ENCODE measurements at regions of chr7 and their contacts with region 1.

Region 1: DNA sequence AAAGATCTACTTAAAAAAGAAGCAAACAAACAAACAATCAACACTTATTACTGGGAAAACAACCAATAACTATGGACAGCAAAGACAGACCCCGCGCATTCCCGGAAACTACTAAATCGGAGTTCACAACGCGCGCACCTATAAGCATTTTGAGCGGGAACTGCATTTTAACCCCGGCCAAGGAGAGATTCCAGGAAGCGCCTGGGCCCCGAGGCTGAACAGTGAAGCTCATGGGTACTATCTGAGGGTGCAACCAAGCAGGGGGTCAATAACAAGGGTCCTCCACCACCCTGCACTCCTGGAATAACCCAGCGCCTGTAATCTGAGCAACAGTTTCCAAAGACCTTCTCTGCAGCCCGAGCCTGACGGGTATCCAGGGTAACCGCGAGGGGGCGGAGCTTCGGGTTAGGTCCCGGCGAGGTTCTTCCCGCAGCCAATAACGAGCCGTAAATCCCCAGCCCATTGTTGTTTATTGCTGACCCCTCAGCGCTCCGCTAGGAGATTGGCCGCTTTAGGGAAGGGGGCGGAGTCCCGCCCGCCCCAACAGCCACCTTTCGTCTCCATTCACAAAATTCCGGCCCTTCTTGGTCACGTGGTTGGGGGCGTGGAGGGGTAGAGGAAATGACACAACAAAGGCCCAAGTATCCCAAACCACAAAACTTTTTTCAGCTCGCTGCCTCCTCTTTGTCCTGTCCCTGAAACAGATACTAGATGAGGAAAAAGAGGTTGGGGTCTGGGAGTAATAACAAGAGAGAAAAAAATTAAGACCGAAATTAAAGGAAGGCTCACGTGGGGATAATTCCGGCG is 1.7 kb upstream of the ETV1 start:
- DNase-seq: peak; percentile 94 to 98 (median 97)
- ATAC-seq: peak; percentile 96 to 98 (median 97)
- H3K4me3 ChIP-seq: peak overlapping the region; percentile 59 to 85 (median 71)
- H3K27ac ChIP-seq: peak overlapping the region; percentile 87 to 96 (median 93)
- H3K4me1 ChIP-seq: peaks cover 0 to 15% (median 4%) of the 10 kb centered on the region in 12 donors
- H3K27me3 ChIP-seq: peaks cover 0 to 2% (median 0%) of the 10 kb centered on the region in 9 donors
- CTCF ChIP-seq: peak in 6 of 12 donors; percentile 7 to 37 (median 20)
- POLR2A ChIP-seq: peak in 1 of 2 donors; percentile 66

Region 2: GRCh38 chr7:14070746-14071444 is 79.7 kb after region 1 on chr7:
- intact Hi-C with region 1: loop called in 2 of 10 experiments (anchors 1 to 5 kb)
- DNase-seq: no peak
- ATAC-seq: no peak
- H3K4me3 ChIP-seq: no peak overlapping the region
- H3K27ac ChIP-seq: no peak overlapping the region
- H3K4me1 ChIP-seq: peaks cover 0 to 14% (median 0%) of the 10 kb centered on the region in 12 donors
- H3K27me3 ChIP-seq: no peaks in the 10 kb centered on the region
- CTCF ChIP-seq: no peak
- POLR2A ChIP-seq: no peak

Region 3: DNA sequence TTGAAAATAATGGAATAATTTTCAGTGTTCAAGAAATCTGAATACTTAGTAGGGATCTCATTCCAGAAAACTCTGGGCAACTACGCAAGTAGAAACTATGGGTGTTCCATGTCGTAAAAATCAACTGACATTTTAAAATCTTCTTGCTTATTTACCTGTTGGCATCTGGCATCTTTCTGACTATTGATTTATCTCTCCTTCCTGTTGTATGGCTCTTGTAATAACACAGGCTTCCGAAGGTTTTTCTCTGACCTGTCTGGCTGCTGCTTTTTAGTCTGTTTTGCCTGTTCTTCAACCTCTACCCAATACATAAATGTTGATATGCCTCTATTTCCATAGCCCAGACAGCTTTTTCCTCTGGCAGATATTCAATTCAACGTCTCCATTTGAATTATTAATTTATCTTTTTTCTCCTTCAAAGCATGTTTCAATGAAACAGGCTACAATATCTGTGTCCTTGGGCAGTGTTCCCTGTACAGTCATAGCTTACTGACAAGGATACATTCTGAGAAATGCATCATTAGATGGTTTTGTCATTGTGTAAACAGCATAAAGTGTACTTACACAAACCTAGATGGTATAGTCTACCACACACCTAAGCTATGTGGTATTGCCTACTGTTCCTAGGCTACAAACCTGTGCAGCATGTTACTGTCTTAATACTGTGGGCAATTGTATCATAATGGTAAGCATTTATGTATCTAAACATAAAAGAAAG is 104.2 kb after region 1 on chr7:
- intact Hi-C with region 1: no loop called
- DNase-seq: no peak
- ATAC-seq: no peak
- H3K4me3 ChIP-seq: no peak overlapping the region
- H3K27ac ChIP-seq: no peak overlapping the region
- H3K4me1 ChIP-seq: no peaks in the 10 kb centered on the region
- H3K27me3 ChIP-seq: no peaks in the 10 kb centered on the region
- CTCF ChIP-seq: no peak
- POLR2A ChIP-seq: no peak

Region 4: DNA sequence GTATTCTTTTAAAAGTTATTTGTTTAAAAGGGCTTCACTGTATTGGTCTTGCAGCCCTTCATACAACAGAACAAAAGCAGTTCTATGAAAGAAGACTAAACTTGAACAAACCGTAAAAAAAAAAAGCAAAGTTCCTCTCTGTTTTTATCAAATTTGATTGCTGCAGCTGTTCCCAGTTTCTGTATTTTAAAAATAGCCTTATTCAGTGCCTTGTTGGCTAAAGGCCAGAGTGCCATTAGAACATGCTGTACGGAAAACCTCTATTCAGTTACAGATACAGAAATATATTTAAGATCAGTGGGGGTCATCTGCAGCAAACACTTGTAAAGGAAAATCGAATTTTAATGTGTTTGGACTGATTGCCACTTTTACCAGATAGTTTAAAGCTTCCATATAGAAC is 206.1 kb after region 1 on chr7:
- intact Hi-C with region 1: loop called in 5 of 10 experiments (anchors 5 to 10 kb)
- DNase-seq: peak in 4 of 5 donors; percentile 32 to 42 (median 38)
- ATAC-seq: peak; percentile 63 to 85 (median 76)
- H3K4me3 ChIP-seq: peak overlapping the region in 2 of 12 donors; percentile 0 to 3
- H3K27ac ChIP-seq: peak overlapping the region in 10 of 12 donors; percentile 6 to 61 (median 34)
- H3K4me1 ChIP-seq: peaks cover 0 to 23% (median 15%) of the 10 kb centered on the region in 12 donors
- H3K27me3 ChIP-seq: no peaks in the 10 kb centered on the region
- CTCF ChIP-seq: no peak
- POLR2A ChIP-seq: no peak

Region 5: GRCh38 chr7:14207138-14207537 is 216.0 kb after region 1 on chr7:
- intact Hi-C with region 1: loop called in 2 of 10 experiments (anchors 10 kb)
- DNase-seq: peak in 4 of 5 donors; percentile 11 to 57 (median 25)
- ATAC-seq: peak; percentile 90 to 97 (median 96)
- H3K4me3 ChIP-seq: no peak overlapping the region
- H3K27ac ChIP-seq: peak overlapping the region in 5 of 12 donors; percentile 5 to 77 (median 63)
- H3K4me1 ChIP-seq: peaks cover 0 to 10% (median 0%) of the 10 kb centered on the region in 12 donors
- H3K27me3 ChIP-seq: no peaks in the 10 kb centered on the region
- CTCF ChIP-seq: no peak
- POLR2A ChIP-seq: no peak

Region 6: GRCh38 chr7:14340393-14341074 is 349.3 kb after region 1 on chr7:
- intact Hi-C with region 1: loop called in 2 of 10 experiments (anchors 10 kb)
- DNase-seq: no peak
- ATAC-seq: no peak
- H3K4me3 ChIP-seq: no peak overlapping the region
- H3K27ac ChIP-seq: no peak overlapping the region
- H3K4me1 ChIP-seq: peaks cover 0 to 5% (median 0%) of the 10 kb centered on the region in 12 donors
- H3K27me3 ChIP-seq: no peaks in the 10 kb centered on the region
- CTCF ChIP-seq: no peak
- POLR2A ChIP-seq: no peak

Region 7: GRCh38 chr7:14457568-14458453 is 466.6 kb after region 1 on chr7:
- intact Hi-C with region 1: loop called (anchors 2 to 10 kb)
- DNase-seq: peak; percentile 66 to 72 (median 68)
- ATAC-seq: peak; percentile 73 to 85 (median 84)
- H3K4me3 ChIP-seq: peak overlapping the region in 3 of 12 donors; percentile 1 to 31 (median 22)
- H3K27ac ChIP-seq: peak overlapping the region in 2 of 12 donors; percentile 34 to 54
- H3K4me1 ChIP-seq: peaks cover 0 to 5% (median 0%) of the 10 kb centered on the region in 12 donors
- H3K27me3 ChIP-seq: no peaks in the 10 kb centered on the region
- CTCF ChIP-seq: peak; percentile 81 to 93 (median 88)
- POLR2A ChIP-seq: no peak

Measured in heart left ventricle (tissue), 16 donors.